PC-9 (cell line): ENCODE measurements at regions of chr11 and their contacts with region 1.

Region 1: GRCh38 chr11:31397239-31397834 is 27.7 kb downstream of the DNAJC24 start:
- DNase-seq: peak in 1 of 2 experiments; percentile 42
- H3K4me3 ChIP-seq: no peak overlapping the region
- H3K27ac ChIP-seq: no peak overlapping the region
- H3K4me1 ChIP-seq: no peaks in the 10 kb centered on the region
- H3K27me3 ChIP-seq: no peaks in the 10 kb centered on the region
- CTCF ChIP-seq: peak; percentile 80

Region 2: DNA sequence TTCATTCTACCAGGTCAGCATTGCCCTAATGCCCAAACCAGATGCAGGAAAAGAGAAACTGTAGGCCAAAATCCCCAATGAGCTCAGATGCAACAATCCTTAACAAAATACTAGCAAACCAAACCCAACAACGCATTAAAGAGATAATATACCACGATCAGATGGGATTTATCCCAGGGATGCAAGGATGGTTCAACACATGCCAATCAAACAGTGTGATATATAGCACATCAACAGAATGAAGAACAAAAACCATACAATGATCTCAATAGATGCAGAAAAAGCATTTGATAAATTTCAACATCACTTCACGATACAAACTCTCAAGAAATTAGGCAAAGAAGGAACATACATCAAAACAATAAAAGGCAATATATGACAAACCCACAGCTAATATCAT is 67.1 kb after region 1 on chr11:
- CTCF ChIA-PET with region 1: no interaction called
- POLR2A ChIA-PET with region 1: no interaction called
- intact Hi-C with region 1: no loop called
- DNase-seq: no peak
- H3K4me3 ChIP-seq: no peak overlapping the region
- H3K27ac ChIP-seq: no peak overlapping the region
- H3K4me1 ChIP-seq: no peaks in the 10 kb centered on the region
- H3K27me3 ChIP-seq: no peaks in the 10 kb centered on the region
- CTCF ChIP-seq: no peak

Region 3: GRCh38 chr11:31870609-31871309 is 473.4 kb after region 1 on chr11:
- CTCF ChIA-PET with region 1: interaction called, 3 read pairs
- POLR2A ChIA-PET with region 1: no interaction called
- intact Hi-C with region 1: loop called (anchors 1 kb)
- DNase-seq: peak; percentile 48 to 50
- H3K4me3 ChIP-seq: no peak overlapping the region
- H3K27ac ChIP-seq: peak overlapping the region; percentile 93
- H3K4me1 ChIP-seq: peaks cover 84% of the 10 kb centered on the region
- H3K27me3 ChIP-seq: no peaks in the 10 kb centered on the region
- CTCF ChIP-seq: peak; percentile 71

Region 4: DNA sequence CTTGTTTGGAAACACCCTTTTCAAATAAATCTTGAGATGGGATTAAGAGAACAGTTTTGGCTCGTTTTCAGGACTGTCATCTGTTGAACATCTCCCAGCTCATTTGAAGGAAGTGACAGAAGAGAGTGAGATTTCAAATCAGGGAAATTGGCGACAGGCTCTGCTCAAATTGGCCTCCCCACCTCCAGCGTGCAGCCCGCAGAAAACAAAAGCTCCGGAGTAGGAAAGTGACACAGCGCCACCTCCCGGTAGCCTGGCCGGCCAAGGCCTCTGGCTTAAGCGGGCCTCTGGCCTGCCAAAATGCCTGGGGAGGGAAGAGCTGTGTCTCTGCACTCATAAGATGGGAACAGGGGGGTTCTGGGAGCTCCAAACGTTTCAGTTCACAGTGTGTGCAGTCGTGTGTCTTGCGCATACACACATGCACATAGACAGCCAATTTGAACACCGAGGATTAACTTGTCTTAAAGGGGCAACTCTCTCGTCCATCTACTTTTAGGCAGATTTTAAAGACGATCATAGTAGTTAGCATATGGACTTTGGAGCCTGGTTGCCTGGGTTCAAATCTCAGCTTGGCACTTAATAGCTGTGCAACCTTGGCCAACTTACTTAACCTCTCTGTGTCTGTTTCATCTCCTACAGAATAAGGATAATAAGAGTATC is 560.9 kb after region 1 on chr11:
- CTCF ChIA-PET with region 1: no interaction called
- POLR2A ChIA-PET with region 1: no interaction called
- intact Hi-C with region 1: loop called (anchors 1 kb)
- DNase-seq: peak; percentile 61 to 70
- H3K4me3 ChIP-seq: no peak overlapping the region
- H3K27ac ChIP-seq: no peak overlapping the region
- H3K4me1 ChIP-seq: peaks cover 16% of the 10 kb centered on the region
- H3K27me3 ChIP-seq: no peaks in the 10 kb centered on the region
- CTCF ChIP-seq: peak; percentile 97

Region 5: DNA sequence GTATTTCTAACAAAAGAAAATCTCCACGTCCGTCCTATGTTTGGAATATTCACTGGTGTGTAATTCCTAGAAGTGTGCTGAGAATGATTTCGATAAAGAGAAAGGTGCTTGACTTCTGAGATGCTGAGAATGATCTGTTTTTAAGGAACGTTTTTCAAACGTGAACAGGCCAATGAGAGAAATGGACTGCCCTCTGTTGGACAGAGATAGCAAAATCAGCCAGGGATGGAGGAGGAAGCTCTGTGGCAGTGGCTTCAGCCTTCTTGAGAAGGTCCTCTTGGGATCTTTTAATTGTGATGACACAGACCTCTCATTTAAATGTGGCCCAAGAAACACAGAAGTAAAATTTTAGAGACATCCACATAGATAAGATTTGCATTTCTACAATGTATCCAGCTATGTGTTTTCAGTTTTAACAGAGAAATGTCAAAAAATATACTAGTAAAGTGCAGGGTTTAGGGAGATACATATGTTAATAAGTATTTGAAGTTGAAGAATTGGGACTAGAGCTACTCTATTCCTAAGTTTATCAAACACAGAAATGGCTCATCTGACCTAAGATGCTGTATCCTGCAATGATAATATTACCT is 609.6 kb after region 1 on chr11:
- CTCF ChIA-PET with region 1: no interaction called
- POLR2A ChIA-PET with region 1: no interaction called
- intact Hi-C with region 1: loop called (anchors 2 kb)
- DNase-seq: peak; percentile 25 to 45
- H3K4me3 ChIP-seq: no peak overlapping the region
- H3K27ac ChIP-seq: no peak overlapping the region
- H3K4me1 ChIP-seq: no peaks in the 10 kb centered on the region
- H3K27me3 ChIP-seq: peaks cover 30% of the 10 kb centered on the region
- CTCF ChIP-seq: peak; percentile 82

Region 6: DNA sequence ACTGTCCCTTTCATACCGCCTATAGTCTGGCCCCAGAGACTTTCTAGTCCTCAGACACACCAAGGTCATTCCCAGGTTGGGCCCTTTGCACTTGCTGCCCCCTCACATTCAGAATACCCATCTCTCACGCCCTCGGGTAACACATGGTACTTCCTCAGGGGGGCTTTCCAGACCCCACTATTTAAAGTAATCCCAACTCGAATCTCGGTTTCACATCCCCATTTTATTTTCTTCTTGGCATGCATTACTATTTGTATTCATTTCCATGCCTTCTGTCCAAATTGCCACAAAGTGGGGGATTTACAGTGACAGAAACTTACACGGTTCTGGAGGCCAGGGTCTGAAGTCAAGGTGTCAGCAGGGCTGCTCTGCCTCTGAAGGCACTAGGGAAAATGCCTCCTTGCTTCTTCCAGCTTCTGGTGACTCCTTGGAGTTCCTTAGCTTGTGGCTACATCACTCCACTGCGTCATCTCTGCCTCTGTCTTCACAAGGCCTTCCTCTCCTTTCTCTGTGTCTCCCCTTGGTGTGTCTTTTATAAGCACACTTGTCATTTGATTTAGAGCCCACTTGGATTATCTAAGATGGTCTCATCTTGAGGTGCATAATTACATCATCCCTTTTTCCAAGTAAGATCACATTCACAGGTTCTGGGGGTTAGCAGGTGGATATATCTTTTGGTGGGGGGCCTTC is 708.7 kb after region 1 on chr11:
- CTCF ChIA-PET with region 1: no interaction called
- POLR2A ChIA-PET with region 1: no interaction called
- intact Hi-C with region 1: loop called (anchors 5 kb)
- DNase-seq: peak in 1 of 2 experiments; percentile 32
- H3K4me3 ChIP-seq: no peak overlapping the region
- H3K27ac ChIP-seq: no peak overlapping the region
- H3K4me1 ChIP-seq: peaks cover 26% of the 10 kb centered on the region
- H3K27me3 ChIP-seq: no peaks in the 10 kb centered on the region
- CTCF ChIP-seq: no peak